Activated T-helper 2 cell treated with anti-CD3 and anti-CD28 coated beads, Interferon-gamma antibody, Interleukin-2, Interleukin-4, amounts not matched to agents 10 μg/mL and 5 μg/mL and 100 μg/mL, durations not matched to agents 14 hours and 24 hours and 36 hours (primary cell): ENCODE measurements at regions of chr5 and their contacts with region 1.

Region 1: GRCh38 chr5:157271740-157272271 is 5.9 kb downstream of the CYFIP2 start:
- DNase-seq: peak; percentile 85
- H3K4me3 Mint-ChIP-seq: peak overlapping the region; percentile 82
- H3K27ac Mint-ChIP-seq: peak overlapping the region; percentile 99
- H3K4me1 Mint-ChIP-seq: peaks cover 88% of the 10 kb centered on the region
- H3K27me3 Mint-ChIP-seq: no peaks in the 10 kb centered on the region

Region 2: DNA sequence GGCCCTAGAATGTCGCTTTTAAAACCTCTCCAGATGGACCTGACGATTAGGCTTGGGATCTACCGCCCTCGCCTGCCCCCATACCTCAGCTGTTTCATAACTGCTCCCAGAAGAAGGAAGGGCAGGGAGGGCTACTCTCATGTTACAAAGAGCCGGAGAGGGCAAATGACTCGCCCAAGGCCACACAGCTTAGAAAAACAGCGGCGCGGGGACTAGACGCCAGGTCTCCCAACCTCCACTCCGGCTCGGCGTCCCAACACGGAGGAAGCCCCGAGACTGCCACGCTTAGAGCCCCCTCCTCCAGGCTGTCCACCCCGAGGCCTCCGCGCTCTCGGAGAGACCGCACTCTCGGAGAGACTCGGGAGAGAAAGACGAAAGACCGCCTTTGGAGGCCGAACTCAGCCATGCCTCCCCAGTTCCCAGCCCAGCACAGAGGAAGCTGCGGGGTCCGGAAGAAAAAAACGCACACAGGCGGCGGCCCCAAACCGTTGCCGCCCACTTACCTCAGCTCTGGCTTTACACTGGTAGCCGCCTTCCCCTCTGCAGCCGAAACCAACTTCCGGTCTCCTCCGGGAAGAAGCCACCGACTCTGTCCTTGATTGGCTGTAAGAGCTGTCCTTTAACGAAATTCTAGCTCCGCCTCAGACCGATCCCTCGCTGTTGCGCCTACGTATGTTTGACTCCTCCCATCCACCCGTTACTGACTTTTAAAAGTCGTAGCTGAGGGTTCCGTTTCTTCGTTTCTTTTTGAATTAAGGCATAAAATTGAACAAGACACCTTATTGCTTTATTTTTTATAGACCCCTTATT is 129.3 kb before region 1 on chr5 and contains the start of gene MED7:
- intact Hi-C with region 1: loop called (anchors 2 kb)
- DNase-seq: peak; percentile 95
- H3K4me3 Mint-ChIP-seq: peak within 1 kb of the TSS; percentile 97
- H3K27ac Mint-ChIP-seq: peak within 1 kb of the TSS; percentile 97
- H3K4me1 Mint-ChIP-seq: peaks cover 31% of the 10 kb centered on the region
- H3K27me3 Mint-ChIP-seq: no peaks in the 10 kb centered on the region
- total RNA-seq, gene MED7: 12.5 and 13.1 TPM in 2 replicates

Region 3: DNA sequence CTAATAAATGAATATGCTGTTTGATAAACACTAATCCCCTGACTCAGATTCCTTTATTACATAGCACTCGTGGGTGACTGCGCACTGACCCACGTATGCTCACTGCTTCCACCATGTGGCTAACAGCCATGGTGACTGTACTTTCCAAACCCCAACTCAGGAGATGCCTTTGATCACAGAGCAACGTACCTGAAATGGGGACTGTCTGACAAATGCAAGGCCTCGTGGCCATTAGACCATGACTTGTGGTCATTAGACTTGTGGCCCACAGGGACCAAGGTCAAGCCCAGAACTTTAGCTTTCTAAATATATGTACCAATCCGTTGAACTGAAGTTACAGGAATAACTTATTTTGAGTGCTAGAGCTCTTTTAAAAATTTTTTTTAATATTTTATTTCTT is 40.7 kb after region 1 on chr5:
- intact Hi-C with region 1: loop called (anchors 2 kb)
- DNase-seq: peak; percentile 47
- H3K4me3 Mint-ChIP-seq: no peak overlapping the region
- H3K27ac Mint-ChIP-seq: peak overlapping the region; percentile 70
- H3K4me1 Mint-ChIP-seq: peaks cover 20% of the 10 kb centered on the region
- H3K27me3 Mint-ChIP-seq: no peaks in the 10 kb centered on the region

Region 4: GRCh38 chr5:157596487-157596886 is 324.7 kb after region 1 on chr5:
- intact Hi-C with region 1: loop called (anchors 5 kb)
- DNase-seq: peak; percentile 49
- H3K4me3 Mint-ChIP-seq: no peak overlapping the region
- H3K27ac Mint-ChIP-seq: peak overlapping the region; percentile 21
- H3K4me1 Mint-ChIP-seq: peaks cover 90% of the 10 kb centered on the region
- H3K27me3 Mint-ChIP-seq: no peaks in the 10 kb centered on the region